Sciatic nerve (tissue), 2 donors: ENCODE measurements at regions of chr3 and their contacts with region 1.

Region 1: DNA sequence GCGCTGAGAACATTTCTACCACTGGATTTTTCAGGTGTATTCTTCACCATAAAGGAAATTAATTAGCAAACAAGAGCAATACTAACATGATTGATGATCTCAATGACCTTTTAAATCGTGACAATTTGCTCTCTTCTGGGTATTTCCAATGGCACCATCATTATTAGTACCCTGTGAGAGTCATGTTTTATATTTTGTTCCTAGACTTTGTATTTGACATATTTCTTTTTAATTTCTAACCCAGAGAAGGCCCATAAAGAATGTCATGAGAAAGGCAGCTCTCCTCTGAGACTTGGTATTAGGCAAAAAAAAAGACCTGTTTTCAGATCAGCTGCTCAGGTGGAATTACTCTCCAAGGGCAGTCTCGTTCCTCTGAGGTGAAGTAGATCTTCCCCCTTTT is 1253.4 kb downstream of the ROBO2 start:
- DNase-seq: no peak
- ATAC-seq: no peak

Region 2: DNA sequence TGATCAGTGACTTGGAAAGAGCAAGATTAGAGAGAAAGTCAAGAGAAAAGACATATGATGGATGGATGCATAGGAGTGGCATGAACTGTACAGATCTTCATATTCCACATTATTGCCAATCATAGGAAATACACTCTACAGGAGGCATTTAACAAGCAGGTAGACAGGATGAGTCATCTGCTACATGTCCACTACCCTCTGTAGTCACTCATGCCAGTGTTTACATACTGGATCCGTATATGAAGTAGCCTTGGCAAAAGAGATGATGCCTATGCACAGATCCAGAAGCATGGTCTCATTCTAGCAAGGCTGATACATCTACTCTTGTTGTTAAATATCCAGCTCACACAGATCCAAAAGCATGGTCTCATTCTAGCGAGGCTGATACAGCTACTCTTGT is 621.3 kb before region 1 on chr3:
- intact Hi-C with region 1: no loop called
- DNase-seq: no peak
- ATAC-seq: no peak

Region 3: DNA sequence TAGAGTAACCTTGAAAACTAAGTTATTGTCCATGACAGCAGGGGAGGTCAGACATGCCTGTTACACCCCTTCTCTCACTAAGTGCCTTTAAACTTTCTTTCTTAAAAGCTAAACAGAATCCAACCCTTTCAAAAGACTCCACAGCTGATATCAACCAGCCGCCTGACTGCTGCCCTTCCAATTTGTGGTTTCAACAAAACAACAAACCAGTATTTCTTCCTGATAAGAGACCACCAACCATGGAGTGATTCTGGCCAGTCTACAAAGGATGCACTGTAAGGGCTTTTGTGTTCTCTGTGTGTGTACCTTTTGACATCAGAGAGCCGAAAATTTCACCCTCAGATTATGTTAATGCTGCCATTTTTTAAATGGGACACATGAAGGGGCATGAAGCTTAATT is 49.1 kb before region 1 on chr3:
- intact Hi-C with region 1: no loop called
- DNase-seq: no peak
- ATAC-seq: no peak

Region 4: DNA sequence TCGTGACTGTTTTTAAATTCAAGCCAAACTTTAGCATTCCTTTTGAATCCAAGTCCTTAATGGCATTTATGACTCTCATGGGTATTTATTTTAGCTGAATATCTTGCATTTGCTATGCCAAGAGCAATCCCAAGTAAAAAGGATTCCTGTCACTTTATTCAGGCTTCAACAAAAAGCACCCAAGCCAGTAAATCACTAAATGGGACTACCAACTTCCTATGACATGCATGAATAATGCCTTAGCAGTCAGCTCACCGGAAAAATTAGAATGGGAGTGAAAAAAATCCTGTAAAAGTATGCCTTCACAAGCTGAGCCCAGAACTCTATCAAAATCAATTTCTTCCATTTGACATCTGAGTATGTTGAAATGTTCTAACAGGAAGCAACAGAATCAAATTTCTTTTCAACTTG is 44.5 kb after region 1 on chr3:
- intact Hi-C with region 1: loop called (anchors 1 kb)
- DNase-seq: no peak
- ATAC-seq: no peak

Region 5: DNA sequence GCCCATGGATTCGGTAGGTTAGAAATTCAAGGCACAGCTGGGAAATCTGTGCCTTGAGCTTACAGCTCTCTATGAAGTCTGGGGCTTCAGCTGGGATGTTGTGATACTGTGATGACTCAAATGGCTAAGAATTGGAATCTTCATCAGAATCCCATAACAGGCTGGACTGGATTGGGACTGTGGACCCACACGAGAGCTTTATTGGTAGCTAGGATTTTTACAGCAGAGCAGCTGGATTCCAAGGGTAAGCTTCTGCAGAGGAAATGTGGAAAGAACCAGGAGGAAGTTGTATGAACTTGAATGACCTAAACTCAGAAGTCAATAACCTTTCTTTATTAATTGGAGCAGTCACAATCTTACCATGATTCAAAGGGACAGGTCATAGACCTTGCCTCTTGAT is 287.4 kb after region 1 on chr3:
- intact Hi-C with region 1: no loop called
- DNase-seq: no peak
- ATAC-seq: no peak